Kidney (tissue), 22 donors: ENCODE measurements at regions of chr3 and their contacts with region 1.

Region 1: GRCh38 chr3:177197041-177197727 is at the start of gene TBL1XR1:
- DNase-seq: peak; percentile 96 to 98 (median 97)
- H3K4me3 ChIP-seq: peak within 1 kb of the TSS; percentile 74 to 92 (median 89)
- H3K27ac ChIP-seq: peak within 1 kb of the TSS; percentile 95 to 97
- H3K4me1 ChIP-seq: peaks cover 5 to 23% (median 8%) of the 10 kb centered on the region in 3 donors
- H3K27me3 ChIP-seq: no peaks in the 10 kb centered on the region
- CTCF ChIP-seq: no peak
- total RNA-seq, gene TBL1XR1: 205 TPM

Region 2: DNA sequence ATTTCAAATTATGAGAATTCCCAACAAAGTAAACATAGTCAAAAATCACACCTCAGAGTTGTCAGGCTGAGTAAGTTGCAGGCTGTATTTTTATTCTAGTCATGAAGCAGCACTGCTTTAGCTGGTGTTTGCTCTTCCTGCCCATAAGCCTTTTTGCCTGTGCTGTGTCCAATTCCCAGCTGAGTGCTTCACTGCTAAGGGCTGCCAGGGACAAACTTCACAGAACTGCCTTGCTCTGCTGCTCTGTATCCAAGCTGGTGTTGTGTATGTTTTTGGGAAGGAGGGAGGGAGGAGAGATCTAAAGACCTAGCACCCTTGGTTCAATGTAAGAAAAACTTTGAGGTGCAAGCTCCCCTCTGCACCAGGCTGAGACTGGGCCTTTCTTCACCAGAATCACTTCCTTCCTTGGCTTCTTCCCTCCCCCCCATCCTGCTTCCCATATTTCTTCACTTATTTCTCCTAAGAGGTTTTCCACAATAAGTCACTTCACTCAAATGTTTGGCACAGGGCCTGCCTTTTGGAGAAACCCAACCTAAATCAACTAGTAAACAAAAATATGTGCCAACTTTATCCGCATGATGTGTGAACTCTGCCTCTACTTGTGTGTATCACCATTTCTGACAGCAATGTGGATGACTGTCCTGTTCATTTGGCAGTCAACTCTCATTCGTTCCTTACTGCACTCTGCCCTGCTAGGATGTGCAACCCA is 156.0 kb before region 1 on chr3:
- intact Hi-C with region 1: loop called (anchors 10 kb)
- DNase-seq: peak in 1 of 5 donors; percentile 61
- H3K4me3 ChIP-seq: no peak overlapping the region
- H3K27ac ChIP-seq: no peak overlapping the region
- H3K4me1 ChIP-seq: peaks cover 0 to 2% (median 0%) of the 10 kb centered on the region in 3 donors
- H3K27me3 ChIP-seq: no peaks in the 10 kb centered on the region
- CTCF ChIP-seq: no peak

Region 3: GRCh38 chr3:177359593-177360357 is 162.6 kb after region 1 on chr3:
- intact Hi-C with region 1: loop called (anchors 5 kb)
- DNase-seq: peak; percentile 98 to 99 (median 99)
- H3K4me3 ChIP-seq: peak overlapping the region; percentile 56 to 74 (median 59)
- H3K27ac ChIP-seq: peak overlapping the region; percentile 92 to 96
- H3K4me1 ChIP-seq: peaks cover 11 to 51% (median 33%) of the 10 kb centered on the region in 3 donors
- H3K27me3 ChIP-seq: no peaks in the 10 kb centered on the region
- CTCF ChIP-seq: peak; percentile 3

Region 4: DNA sequence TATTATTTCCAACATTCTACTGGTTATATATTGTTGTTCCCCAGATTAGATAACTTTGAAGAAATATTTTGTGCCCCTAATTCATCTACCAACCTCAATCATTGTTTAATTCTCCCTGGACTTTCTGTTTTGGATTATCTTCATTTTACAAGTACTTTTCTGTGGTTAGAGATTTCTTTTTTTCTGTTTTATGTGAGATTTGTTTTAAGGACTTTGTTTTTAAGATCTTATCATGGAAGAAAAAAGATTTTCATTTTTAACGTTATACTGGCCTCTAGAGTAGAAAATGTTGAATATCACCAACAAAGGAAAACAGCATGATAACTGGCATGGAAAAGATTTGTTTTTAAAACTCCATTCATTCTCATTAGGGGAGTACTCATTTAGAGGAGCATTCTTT is 1128.1 kb after region 1 on chr3:
- intact Hi-C with region 1: loop called (anchors 10 kb)
- DNase-seq: peak in 2 of 5 donors; percentile 63 to 71
- H3K4me3 ChIP-seq: no peak overlapping the region
- H3K27ac ChIP-seq: no peak overlapping the region
- H3K4me1 ChIP-seq: peaks cover 0 to 5% (median 0%) of the 10 kb centered on the region in 3 donors
- H3K27me3 ChIP-seq: no peaks in the 10 kb centered on the region
- CTCF ChIP-seq: peak; percentile 28